HCT116 (cell line): ENCODE measurements at regions of chr16 and their contacts with region 1.

Region 1: DNA sequence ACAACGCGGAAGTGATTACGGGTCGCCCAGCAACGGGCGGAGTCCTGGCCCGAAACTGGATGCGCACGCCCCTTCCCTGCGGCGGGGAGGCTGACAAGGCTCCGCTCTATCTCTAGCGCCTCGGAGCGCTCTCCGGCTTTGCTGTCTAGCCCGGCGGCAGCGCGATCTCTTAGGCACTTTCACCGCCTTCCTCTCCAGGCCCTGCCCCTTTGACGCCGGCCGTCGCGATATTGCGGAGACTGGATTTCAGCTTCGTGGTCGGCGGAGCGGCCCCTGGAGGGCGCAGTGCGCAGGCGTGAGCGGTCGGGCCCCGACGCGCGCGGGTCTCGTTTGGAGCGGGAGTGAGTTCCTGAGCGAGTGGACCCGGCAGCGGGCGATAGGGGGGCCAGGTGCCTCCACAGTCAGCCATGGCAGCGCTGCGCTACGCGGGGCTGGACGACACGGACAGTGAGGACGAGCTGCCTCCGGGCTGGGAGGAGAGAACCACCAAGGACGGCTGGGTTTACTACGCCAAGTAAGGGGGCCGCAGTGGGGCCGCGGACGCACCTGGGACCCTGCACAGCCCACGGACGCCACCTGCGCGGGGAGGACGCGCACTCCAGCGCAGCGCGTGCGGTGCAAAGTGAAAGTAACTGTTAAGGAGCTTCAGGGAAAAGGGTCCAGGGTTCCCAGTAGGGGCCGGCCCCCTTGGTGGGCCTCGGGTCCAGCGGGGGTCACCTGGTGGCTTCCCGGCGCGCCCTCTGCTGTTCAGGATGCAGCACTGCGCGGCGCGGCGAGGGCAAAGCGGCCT is at the start of gene WWOX:
- DNase-seq: peak; percentile 93
- ATAC-seq: peak; percentile 91
- H3K4me3 ChIP-seq: peak within 1 kb of the TSS; percentile 75 to 85
- H3K27ac ChIP-seq: peak within 1 kb of the TSS; percentile 79
- H3K4me1 ChIP-seq: peaks cover 5 to 15% of the 10 kb centered on the region in 2 experiments; a peak in 2 of 4 replicates
- H3K27me3 ChIP-seq: no peaks in the 10 kb centered on the region
- CTCF ChIP-seq: peak; percentile 56 to 91 (median 88); a peak in 5 of 6 replicates
- POLR2A ChIP-seq: no peak
- RAD21 ChIP-seq: peak; percentile 49
- total RNA-seq, gene WWOX: 13.7 TPM

Region 2: DNA sequence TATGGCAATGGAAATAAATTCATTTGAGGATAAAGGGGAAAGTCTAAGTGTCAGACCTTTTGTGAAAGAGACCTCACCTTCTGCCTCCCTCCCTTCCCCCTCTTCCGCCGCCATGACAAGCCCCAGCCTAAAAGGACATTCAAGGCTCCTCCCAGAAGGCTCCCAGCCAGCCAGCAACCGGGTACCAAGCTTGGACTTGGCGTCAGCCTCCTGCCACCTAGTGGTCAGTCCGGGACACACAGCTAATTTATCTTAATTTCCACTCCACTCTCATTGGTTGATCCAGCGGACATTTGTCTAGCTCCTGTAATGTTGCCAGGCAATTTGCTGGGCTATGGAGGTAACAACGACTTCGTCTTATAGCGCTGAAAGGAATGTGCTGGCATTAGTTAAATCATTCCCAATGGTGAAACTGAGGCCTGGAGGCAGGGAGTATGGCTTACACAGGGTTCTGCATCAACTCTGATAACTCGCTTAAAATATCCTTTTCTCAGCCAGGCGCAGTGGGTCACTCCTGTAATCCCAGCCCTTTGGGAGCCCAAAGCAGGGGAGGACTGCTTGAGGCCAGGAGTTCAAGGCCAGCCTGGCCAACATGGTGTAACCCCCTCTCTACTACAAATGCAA is 96.5 kb before region 1 on chr16:
- CTCF ChIA-PET with region 1: interaction called, 11 read pairs
- POLR2A ChIA-PET with region 1: no interaction called
- RAD21 ChIA-PET with region 1: no interaction called
- intact Hi-C with region 1: loop called (anchors 5 kb)
- DNase-seq: peak; percentile 91
- ATAC-seq: peak; percentile 95
- H3K4me3 ChIP-seq: no peak overlapping the region
- H3K27ac ChIP-seq: no peak overlapping the region
- H3K4me1 ChIP-seq: peaks cover 0 to 6% of the 10 kb centered on the region in 2 experiments; a peak in 1 of 4 replicates
- H3K27me3 ChIP-seq: no peaks in the 10 kb centered on the region
- CTCF ChIP-seq: peak; percentile 78 to 92 (median 88)
- POLR2A ChIP-seq: no peak
- RAD21 ChIP-seq: peak; percentile 85

Region 3: DNA sequence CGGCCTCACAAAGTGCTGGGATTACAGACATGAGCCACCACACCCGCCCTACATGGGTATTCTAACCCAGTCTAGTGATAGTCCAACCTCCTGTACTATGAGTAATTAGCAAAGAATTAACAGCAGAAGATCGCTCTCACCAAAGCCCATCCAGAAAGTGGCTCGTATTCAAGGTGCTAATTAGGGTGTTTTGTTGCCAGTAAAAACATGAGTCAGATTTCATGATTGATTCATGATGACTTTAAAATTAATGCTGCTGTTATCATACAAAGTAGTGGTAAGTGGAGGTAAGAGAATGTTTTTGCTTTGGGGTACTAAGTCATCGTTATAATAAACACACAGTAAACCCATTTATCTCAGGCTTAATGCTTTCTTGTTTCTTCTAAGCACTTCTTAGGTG is 428.7 kb after region 1 on chr16:
- CTCF ChIA-PET with region 1: no interaction called
- POLR2A ChIA-PET with region 1: no interaction called
- RAD21 ChIA-PET with region 1: no interaction called
- intact Hi-C with region 1: no loop called
- DNase-seq: no peak
- ATAC-seq: no peak
- H3K4me3 ChIP-seq: no peak overlapping the region
- H3K27ac ChIP-seq: no peak overlapping the region
- H3K4me1 ChIP-seq: no peaks in the 10 kb centered on the region
- H3K27me3 ChIP-seq: no peaks in the 10 kb centered on the region
- CTCF ChIP-seq: no peak
- POLR2A ChIP-seq: no peak
- RAD21 ChIP-seq: no peak